Heart left ventricle (tissue), 16 donors: ENCODE measurements at regions of chr1 and their contacts with region 1.

Region 1: DNA sequence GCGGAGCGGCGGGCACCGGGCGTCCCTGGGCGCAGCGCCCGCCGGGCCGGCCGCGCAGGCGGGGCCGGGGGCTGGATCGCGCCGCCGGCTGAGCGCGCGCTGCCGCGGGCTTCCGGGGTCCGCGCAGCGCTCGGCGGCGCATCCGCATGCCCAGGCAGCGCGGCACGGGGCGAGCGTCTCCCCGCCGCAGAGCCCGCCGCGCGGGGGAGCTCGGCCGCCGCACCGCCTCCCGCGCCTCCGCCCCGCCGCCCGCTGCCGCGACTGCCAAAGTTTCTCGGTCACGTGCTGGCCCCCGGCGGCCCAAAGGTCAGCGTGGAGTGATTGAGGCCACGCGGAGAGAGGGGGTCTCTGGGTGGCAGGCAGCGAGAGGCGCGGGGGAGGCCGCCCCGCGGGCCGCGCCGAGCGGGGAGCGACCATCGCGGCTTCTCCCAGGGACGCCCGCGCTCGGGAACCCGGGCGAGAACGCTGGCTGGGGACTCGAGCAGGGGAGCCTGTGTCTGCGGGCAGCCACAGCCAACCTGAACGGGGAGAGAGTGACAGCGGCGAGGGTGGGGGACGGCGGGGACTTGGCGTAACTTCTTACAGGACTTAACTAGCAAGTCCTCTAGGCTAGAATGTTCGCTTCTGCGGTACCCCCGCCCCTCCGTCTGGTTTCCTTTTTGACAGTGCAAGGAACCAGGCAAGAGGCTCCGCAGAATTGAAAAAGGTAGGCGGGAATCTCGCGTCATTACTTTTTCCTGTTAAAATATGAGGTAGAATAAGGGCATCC is at the start of gene ILDR2:
- DNase-seq: peak; percentile 45 to 72 (median 58)
- ATAC-seq: peak; percentile 26 to 91 (median 80)
- H3K4me3 ChIP-seq: peak within 1 kb of the TSS; percentile 55 to 90 (median 70)
- H3K27ac ChIP-seq: peak within 1 kb of the TSS in 11 of 12 donors; percentile 50 to 87 (median 71)
- H3K4me1 ChIP-seq: peaks cover 0 to 19% (median 2%) of the 10 kb centered on the region in 12 donors
- H3K27me3 ChIP-seq: peaks cover 0 to 51% (median 7%) of the 10 kb centered on the region in 9 donors
- CTCF ChIP-seq: peak in 3 of 12 donors; percentile 21 to 34 (median 24)
- POLR2A ChIP-seq: no peak
- total RNA-seq, gene ILDR2: 3.2 to 12.4 (median 6.3) TPM

Region 2: GRCh38 chr1:166920561-166921475 is 54.7 kb before region 1 on chr1:
- intact Hi-C with region 1: loop called in 2 of 10 experiments (anchors 5 to 10 kb)
- DNase-seq: peak in 2 of 5 donors; percentile 20 to 38
- ATAC-seq: peak in 3 of 4 donors; percentile 44 to 77 (median 73)
- H3K4me3 ChIP-seq: peak overlapping the region; percentile 22 to 57 (median 50)
- H3K27ac ChIP-seq: peak overlapping the region in 10 of 12 donors; percentile 11 to 67 (median 50)
- H3K4me1 ChIP-seq: peaks cover 0 to 19% (median 5%) of the 10 kb centered on the region in 12 donors
- H3K27me3 ChIP-seq: peaks cover 0 to 45% (median 11%) of the 10 kb centered on the region in 9 donors
- CTCF ChIP-seq: no peak
- POLR2A ChIP-seq: no peak

Region 3: GRCh38 chr1:167922023-167922422 is 946.5 kb after region 1 on chr1:
- intact Hi-C with region 1: no loop called
- DNase-seq: no peak
- ATAC-seq: peak; percentile 61 to 84 (median 80)
- H3K4me3 ChIP-seq: peak overlapping the region in 3 of 12 donors; percentile 2 to 9 (median 8)
- H3K27ac ChIP-seq: peak overlapping the region in 10 of 12 donors; percentile 0 to 67 (median 50)
- H3K4me1 ChIP-seq: peaks cover 0 to 37% (median 15%) of the 10 kb centered on the region in 12 donors
- H3K27me3 ChIP-seq: no peaks in the 10 kb centered on the region
- CTCF ChIP-seq: no peak
- POLR2A ChIP-seq: no peak